ENCODE measurements at regions of chr14 and their contacts with region 1.

Region 1: GRCh38 chr14:64137657-64138290 is 156.4 kb downstream of the ESR2 start:
- DNase-seq: no peak
- ATAC-seq: no peak

Region 2: DNA sequence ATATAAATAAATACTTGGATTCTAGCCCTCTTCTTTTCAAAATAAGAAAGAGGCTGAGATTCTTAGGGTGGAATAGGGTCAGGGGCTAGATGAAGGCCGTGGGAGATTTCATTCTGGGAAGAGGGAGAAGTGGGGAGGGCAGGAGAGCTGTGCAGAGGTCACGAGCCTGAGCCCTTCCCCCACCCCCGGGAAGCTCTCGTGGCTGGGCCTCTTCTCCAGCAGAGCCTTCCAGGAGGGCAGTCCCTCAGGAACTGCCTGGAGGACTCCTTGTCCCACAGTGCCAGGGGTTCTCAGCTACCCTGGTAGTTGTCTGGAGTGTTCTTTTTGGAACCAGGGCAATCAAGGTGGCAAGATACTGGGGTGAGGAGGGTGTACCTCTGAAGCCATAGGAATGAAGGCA is 62.4 kb after region 1 on chr14:
- intact Hi-C with region 1: no loop called
- DNase-seq: peak; percentile 78
- ATAC-seq: peak; percentile 76

Region 3: GRCh38 chr14:64303471-64303917 is 165.7 kb after region 1 on chr14:
- intact Hi-C with region 1: loop called (anchors 10 kb)
- DNase-seq: no peak
- ATAC-seq: peak; percentile 65

Region 4: DNA sequence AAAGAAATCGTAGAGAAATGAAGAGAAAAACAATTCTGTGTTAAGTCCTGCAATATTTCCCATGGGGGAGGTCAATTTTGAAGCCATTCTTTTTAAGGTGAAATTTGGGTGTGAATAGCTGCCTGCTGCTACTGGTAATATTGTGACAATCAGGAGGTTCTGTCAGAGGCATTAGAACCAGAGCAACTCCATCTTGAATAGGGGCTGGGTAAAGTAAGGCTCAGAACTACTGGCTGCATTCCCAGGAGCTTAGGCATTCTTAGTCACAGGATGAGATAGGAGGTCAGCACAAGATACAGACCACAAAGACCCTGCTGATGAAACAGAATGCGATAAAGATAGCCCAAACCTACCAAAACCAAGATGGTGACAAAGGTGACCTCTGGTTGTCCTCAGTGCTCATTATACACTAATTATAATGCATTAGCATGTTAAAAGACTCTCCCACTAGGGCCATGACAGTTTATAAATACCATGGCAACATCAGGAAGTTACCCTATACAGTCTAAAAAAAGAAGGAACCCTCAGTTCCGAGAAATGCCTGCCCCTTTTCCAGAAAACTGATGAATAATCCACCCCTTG is 225.6 kb after region 1 on chr14:
- intact Hi-C with region 1: no loop called
- DNase-seq: no peak
- ATAC-seq: no peak